GM10248 (cell line): ENCODE measurements at regions of chr16 and their contacts with region 1.

Region 1: GRCh38 chr16:30458561-30459394 is 13.1 kb upstream of the SEPHS2 start:
- DNase-seq: peak; percentile 77
- CTCF ChIP-seq: no peak

Region 2: DNA sequence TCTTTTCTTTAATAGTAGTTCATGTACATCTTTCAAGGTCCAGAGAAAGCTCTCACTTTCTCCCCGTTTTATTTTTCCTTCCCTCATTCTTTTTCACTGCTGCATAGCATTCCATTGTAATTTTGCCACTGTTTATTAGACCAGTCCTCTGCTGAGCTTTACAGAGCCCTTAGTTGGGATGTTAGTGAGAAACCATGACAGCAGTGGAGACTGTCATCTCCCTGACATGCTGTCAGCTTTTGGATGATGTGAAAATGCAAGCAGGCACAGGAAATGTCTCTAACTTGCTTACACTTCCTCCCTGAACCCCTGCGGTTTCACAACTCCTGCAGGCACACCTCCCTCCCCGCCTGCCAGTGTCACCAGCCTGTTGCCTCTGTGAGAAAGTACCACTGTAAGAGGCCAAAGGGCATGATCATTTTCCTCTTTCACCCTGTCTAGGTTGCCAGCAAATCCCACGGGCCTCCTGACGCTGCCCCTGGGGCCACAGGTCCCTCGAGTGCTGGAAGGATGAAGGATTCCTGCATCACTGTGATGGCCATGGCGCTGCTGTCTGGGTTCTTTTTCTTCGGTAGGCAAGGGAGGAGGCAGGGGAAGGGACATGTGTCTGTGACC is 13.7 kb after region 1 on chr16 and contains the start of gene ITGAL:
- CTCF ChIA-PET with region 1: interaction called, 58 read pairs
- POLR2A ChIA-PET with region 1: interaction called, 12 read pairs
- DNase-seq: peak; percentile 70
- CTCF ChIP-seq: no peak

Region 3: GRCh38 chr16:30644334-30644830 is 185.6 kb after region 1 on chr16:
- CTCF ChIA-PET with region 1: no interaction called
- POLR2A ChIA-PET with region 1: no interaction called
- DNase-seq: no peak
- CTCF ChIP-seq: no peak